ENCODE measurements at regions of chr9 and their contacts with region 1.

Region 1: GRCh38 chr9:112333639-112334431 is 416 bp upstream of the PTBP3 start:
- DNase-seq: peak; percentile 94 to 98 (median 96)
- ATAC-seq: peak; percentile 93 to 97 (median 96)
- H3K4me3 ChIP-seq: peak overlapping the region; percentile 71 to 100 (median 86)
- H3K27ac ChIP-seq: peak overlapping the region; percentile 92 to 100 (median 98)
- H3K4me1 ChIP-seq: peaks cover 0 to 39% (median 14%) of the 10 kb centered on the region in 12 donors
- H3K27me3 ChIP-seq: no peaks in the 10 kb centered on the region
- CTCF ChIP-seq: peak; percentile 28 to 73 (median 60)
- POLR2A ChIP-seq: no peak

Region 2: GRCh38 chr9:112097712-112098688 is 235.8 kb before region 1 on chr9:
- intact Hi-C with region 1: loop called in 7 of 10 experiments (anchors 1 to 10 kb)
- DNase-seq: peak in 4 of 5 donors; percentile 47 to 68 (median 54)
- ATAC-seq: peak; percentile 42 to 86 (median 82)
- H3K4me3 ChIP-seq: no peak overlapping the region
- H3K27ac ChIP-seq: no peak overlapping the region
- H3K4me1 ChIP-seq: peaks cover 0 to 53% (median 0%) of the 10 kb centered on the region in 12 donors
- H3K27me3 ChIP-seq: no peaks in the 10 kb centered on the region
- CTCF ChIP-seq: peak; percentile 79 to 95 (median 90)
- POLR2A ChIP-seq: no peak

Region 3: DNA sequence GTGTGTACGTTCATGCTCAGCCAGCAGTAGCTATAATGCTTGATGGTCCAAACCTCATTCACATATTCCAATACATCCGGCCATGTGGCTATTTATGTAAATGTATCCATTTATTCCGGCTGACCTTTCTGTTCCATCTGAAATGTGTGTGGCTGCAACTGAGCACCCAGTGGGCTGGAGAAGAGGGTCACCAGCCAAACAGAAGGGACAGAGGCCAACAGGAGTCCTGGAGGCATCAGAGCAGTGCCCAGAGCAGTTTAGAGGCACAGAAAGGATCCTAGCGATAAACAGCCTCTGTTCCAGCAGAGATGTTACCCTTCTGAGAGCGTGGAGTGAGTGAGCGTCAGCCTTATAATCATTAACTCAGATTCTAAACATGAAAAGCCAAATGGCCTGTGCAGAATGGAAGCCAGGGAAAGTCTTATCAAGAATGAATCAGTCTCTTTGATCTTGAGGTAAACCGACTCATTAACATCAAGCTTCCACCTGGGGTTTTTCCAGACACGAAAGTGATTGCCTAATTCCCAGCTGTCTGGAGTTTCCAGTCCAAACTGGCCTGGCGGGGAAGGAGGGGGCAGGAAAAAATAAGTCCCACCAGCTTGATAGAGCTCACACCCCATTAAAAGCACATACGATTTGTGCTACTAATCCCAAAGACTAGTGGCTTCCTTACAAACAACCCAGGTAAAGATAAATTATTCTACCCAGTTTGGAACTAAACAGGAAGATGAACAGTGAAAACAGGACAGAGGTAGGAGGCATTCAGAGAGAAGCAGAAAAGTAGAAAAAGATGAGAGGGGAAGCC is 214.4 kb before region 1 on chr9:
- intact Hi-C with region 1: no loop called
- DNase-seq: no peak
- ATAC-seq: no peak
- H3K4me3 ChIP-seq: no peak overlapping the region
- H3K27ac ChIP-seq: no peak overlapping the region
- H3K4me1 ChIP-seq: no peaks in the 10 kb centered on the region
- H3K27me3 ChIP-seq: no peaks in the 10 kb centered on the region
- CTCF ChIP-seq: no peak
- POLR2A ChIP-seq: no peak

Region 4: DNA sequence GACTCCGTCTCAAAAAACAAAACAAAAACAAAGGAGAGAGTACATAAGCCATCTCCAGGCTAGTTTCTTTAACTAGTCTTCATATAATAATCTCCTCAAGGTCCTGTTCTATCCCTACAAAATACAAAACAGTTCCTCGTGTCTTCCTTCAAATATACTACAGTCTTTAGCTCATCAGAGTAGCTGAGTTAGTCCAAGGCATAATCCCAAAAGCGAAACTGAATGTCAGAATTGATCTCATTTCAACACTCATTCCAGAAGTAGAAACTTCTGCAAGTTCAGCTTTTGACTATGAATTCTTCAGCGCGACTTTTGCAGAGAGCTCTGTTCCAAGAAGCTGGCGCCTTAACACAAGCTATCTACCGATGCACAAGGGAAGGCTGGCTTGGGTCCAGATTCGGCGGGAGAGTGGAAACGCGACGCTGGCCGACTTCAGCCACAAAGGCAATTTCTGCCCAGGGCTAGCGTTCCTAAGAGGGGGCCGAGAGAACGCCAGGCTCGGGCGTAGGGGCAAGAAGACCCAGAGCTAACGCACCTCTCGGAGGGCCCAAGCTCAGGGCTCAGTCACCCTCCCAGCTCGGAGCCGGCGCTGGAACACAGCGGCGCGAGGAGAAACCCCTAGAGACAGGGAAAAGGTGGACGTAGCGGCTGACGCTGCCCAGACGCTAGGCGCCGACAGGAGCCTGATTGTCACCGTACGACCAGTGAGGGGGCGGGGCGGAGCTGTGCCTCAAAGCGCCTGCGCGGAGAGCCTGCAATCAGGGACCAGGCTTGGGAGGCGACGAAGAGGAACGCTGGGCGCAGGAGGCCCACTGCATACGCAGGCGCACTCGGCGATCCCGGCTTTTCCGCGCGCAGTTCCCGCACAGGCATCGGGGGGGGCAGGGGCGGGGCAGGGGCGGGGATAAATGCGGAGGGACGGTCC is 45.6 kb after region 1 on chr9:
- intact Hi-C with region 1: loop called in 3 of 10 experiments (anchors 1 to 5 kb)
- DNase-seq: peak; percentile 99 to 100 (median 100)
- ATAC-seq: peak; percentile 96 to 98 (median 98)
- H3K4me3 ChIP-seq: peak overlapping the region; percentile 61 to 99 (median 82)
- H3K27ac ChIP-seq: peak overlapping the region; percentile 90 to 99 (median 98)
- H3K4me1 ChIP-seq: peaks cover 0 to 60% (median 40%) of the 10 kb centered on the region in 12 donors
- H3K27me3 ChIP-seq: no peaks in the 10 kb centered on the region
- CTCF ChIP-seq: peak in 1 of 12 donors; percentile 16
- POLR2A ChIP-seq: peak in 1 of 2 donors; percentile 94

Measured in heart left ventricle (tissue), 16 donors.